ENCODE measurements at regions of chr7 and their contacts with region 1.

Region 1: DNA sequence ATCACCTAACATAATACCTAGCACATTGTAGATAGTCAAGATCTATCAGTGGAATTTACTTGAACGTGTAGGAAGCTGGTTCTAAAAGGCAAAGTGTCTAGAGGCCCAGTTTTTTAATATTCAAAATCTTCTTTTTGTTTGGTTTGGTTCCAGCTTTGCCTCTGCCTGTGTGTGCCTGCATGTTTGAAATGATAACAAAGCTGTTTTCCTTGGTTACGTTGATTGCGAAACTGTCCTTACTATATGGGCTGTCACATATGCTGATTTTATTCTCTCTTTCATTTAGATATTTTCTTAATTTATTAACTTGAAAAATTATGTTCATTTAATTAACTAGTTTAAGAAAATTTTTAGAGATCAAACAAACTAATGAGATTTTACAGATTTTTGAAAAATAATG is 237.3 kb downstream of the SEMA3A start:
- DNase-seq: peak; percentile 17

Region 2: DNA sequence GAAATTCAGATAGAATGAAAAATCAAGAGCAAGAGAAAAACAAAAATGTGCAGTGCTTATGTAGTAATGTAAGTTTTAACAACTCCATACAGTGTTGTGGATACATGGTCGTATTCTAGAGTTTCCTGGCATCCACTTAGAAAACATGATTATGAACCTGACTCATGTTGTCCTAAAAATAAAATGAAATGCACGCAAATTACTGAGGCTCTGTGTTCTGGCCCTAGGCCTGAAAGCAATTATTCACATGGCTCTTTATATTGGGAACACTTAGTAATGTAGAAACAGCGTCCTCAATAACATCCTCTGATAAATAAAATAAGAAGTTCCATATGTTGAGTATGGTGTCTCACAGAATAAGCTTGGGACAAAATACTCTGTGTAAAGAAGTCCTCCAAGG is 108.2 kb before region 1 on chr7:
- in situ Hi-C with region 1: no loop called
- DNase-seq: no peak

Region 3: GRCh38 chr7:85023045-85023712 is 1065.8 kb after region 1 on chr7:
- in situ Hi-C with region 1: loop called (anchors 25 kb)
- DNase-seq: peak; percentile 54